Thyroid gland (tissue), 4 donors: ENCODE measurements at regions of chr22 and their contacts with region 1.

Region 1: GRCh38 chr22:31630331-31631329 is 31.4 kb downstream of the PISD start:
- DNase-seq: peak; percentile 82 to 89
- H3K4me3 ChIP-seq: peak overlapping the region; percentile 59 to 88 (median 82)
- H3K27ac ChIP-seq: peak overlapping the region; percentile 59 to 93 (median 90)
- H3K4me1 ChIP-seq: peaks cover 39 to 51% of the 10 kb centered on the region in 2 donors
- H3K27me3 ChIP-seq: no peaks in the 10 kb centered on the region
- CTCF ChIP-seq: no peak
- POLR2A ChIP-seq: peak in 1 of 2 donors; percentile 46

Region 2: DNA sequence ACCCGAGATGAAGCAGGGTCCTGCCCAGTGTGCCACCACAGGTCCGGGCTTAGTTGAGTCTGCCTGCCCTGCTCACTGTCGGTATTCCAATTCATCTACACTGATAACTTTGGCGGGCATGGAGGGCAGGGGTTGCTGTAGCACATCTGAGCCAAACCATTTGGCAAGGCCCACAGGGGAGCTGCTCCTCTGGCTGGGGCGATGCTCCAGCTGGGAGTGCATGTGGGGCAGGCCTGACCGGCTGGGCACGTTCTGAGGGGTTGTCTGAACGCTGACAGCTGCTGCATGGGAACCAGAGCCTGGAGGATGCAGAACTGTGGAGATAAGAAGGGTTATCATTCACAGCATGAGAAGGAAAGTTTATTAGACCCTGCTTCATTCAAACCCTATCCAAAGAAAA is 190.8 kb before region 1 on chr22:
- intact Hi-C with region 1: loop called (anchors 10 kb)
- DNase-seq: no peak
- H3K4me3 ChIP-seq: no peak overlapping the region
- H3K27ac ChIP-seq: no peak overlapping the region
- H3K4me1 ChIP-seq: no peaks in the 10 kb centered on the region
- H3K27me3 ChIP-seq: no peaks in the 10 kb centered on the region
- CTCF ChIP-seq: no peak
- POLR2A ChIP-seq: no peak

Region 3: DNA sequence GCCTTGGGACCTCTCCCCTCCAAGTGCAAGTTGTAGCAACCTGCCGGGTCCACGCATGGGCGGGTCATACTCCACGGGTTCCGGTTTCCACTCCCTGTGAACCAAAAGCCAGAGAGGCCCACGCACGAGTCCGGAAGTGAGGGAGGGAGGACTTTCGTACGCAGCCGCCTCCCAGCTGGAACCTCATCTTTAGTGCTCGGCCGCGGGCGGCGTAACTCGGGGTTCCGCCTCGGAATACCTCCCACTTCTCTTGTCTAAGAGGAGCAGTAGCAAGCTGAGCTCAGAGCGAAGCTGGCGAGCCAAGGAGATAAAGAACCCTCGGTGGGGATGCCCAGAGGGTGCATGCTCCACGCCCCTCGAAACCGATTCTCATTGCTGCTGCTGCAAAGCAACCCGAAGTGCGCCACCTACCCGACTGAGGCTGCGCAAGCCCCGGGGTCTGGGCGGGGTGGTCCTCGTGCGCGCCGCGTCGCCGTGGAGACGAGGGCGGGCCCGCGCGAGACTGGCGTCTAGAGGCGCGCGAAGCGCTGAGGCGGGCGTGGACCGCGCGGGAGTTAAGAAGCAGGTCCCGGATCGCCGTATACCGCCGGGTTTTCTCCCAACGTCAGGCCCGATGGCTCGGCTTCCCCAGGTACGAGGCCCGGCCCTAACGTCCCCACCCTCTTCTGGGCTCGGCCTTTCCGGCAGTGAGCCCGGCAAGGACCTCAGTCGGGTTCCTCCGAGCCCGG is 134.5 kb before region 1 on chr22 and contains the start of gene SFI1:
- intact Hi-C with region 1: loop called (anchors 10 kb)
- DNase-seq: peak; percentile 93 to 94
- H3K4me3 ChIP-seq: peak within 1 kb of the TSS; percentile 30 to 82 (median 50)
- H3K27ac ChIP-seq: peak within 1 kb of the TSS; percentile 32 to 87 (median 80)
- H3K4me1 ChIP-seq: peaks cover 15 to 22% of the 10 kb centered on the region in 2 donors
- H3K27me3 ChIP-seq: no peaks in the 10 kb centered on the region
- CTCF ChIP-seq: peak in 2 of 6 experiments; percentile 8 to 10
- POLR2A ChIP-seq: peak in 1 of 2 donors; percentile 84
- total RNA-seq, gene SFI1: 31.1 to 57.6 (median 43.1) TPM

Region 4: DNA sequence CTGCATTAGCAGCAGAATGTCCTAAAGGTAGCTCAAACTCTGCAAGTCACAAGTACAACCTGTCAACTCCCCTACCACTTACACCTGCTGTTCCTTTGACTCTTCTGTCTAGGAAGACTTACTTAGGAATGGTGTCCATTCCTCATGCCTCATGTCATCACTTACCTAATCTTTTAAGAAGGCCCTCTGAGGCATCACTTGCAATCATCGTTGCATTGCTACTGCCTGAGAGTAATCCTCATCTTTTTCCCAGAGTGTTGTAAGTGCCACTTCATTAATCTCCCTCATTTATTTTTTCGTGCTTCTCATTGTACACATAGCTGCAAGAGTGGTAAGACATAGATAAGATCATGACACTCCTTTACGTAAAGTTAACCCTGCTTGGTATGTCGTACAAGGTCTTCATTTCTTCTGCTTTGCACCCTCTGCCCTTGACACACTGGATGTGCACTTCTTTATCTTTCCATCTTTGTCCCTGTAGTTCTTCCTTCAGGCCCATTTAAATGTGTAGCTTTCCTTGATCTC is 79.7 kb before region 1 on chr22:
- intact Hi-C with region 1: no loop called
- DNase-seq: no peak
- H3K4me3 ChIP-seq: no peak overlapping the region
- H3K27ac ChIP-seq: no peak overlapping the region
- H3K4me1 ChIP-seq: no peaks in the 10 kb centered on the region
- H3K27me3 ChIP-seq: no peaks in the 10 kb centered on the region
- CTCF ChIP-seq: no peak
- POLR2A ChIP-seq: no peak

Region 5: GRCh38 chr22:31561238-31561887 is 69.3 kb before region 1 on chr22:
- intact Hi-C with region 1: loop called (anchors 5 kb)
- DNase-seq: peak; percentile 86 to 89
- H3K4me3 ChIP-seq: no peak overlapping the region
- H3K27ac ChIP-seq: peak overlapping the region in 1 of 3 donors; percentile 16
- H3K4me1 ChIP-seq: no peaks in the 10 kb centered on the region
- H3K27me3 ChIP-seq: no peaks in the 10 kb centered on the region
- CTCF ChIP-seq: peak; percentile 31 to 85 (median 74)
- POLR2A ChIP-seq: no peak